Ascending aorta (tissue), 2 donors: ENCODE measurements at regions of chr3 and their contacts with region 1.

Region 1: DNA sequence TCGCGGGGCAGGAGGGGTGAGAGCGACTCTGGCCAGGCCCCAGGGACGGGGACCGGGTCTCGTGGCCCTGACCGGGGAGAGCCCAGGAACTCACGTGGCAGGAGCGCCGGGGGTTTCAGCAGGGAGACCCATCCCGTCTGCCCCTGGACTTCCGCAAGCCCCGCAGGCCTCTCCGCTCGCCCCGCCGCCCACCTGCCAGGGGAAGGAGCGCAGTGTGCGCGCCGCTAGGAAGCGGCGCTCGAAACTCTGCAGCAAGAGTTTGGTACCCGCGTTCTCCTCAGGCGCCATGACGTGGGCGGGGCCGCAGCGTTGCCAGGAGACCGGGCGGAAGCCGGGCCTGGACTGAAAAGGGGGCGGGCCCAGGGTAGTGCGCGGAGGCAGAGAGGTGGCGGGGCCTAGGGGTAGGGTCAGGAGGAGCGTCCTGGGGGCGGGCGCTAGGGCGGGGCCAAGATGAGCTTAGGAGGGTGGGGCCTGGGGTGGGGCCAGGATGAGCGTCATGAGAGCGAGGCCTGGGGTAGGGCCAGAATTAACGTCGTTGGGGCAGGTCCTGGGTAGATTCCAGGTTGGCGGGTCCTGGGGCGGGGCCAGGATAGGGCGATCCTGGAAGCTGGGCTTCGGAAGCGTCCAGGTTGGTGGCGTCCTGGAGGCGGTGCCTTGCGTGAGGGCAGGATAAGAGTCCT is 29.7 kb downstream of the ALG1L2 start:
- DNase-seq: peak; percentile 95 to 99
- H3K4me3 ChIP-seq: peak overlapping the region; percentile 82 to 87
- H3K27ac ChIP-seq: peak overlapping the region; percentile 72 to 80
- H3K4me1 ChIP-seq: peaks cover 0 to 2% of the 10 kb centered on the region in 2 donors
- H3K27me3 ChIP-seq: no peaks in the 10 kb centered on the region
- CTCF ChIP-seq: no peak

Region 2: DNA sequence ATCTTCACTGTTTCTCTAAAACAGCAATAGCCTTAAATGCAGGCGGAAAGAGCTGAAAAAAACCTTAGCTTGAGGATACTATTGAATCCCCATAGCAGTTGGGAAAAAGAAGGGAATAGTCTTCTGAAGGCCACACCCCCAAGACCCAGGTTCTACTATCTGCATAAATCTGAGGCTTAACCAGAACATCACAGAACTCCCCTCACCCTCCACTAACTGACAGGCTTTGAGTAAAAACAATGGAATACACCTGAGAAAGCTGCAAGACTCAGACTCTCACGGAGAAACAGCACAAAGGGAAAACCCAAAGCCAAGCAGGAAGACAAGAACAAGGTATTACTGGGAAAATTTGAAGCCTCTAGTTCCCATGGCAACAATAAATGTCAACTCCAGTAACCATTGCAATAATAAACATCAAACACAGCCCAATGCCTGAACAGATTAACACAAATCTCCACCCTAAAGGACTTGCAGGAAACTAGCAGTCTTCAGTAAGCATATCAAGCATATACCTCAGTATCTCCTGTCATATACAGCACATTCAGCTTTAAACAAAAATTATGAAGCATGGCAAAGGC is 274.2 kb before region 1 on chr3:
- intact Hi-C with region 1: no loop called
- DNase-seq: no peak
- H3K4me3 ChIP-seq: no peak overlapping the region
- H3K27ac ChIP-seq: no peak overlapping the region
- H3K4me1 ChIP-seq: peaks cover 0 to 2% of the 10 kb centered on the region in 2 donors
- H3K27me3 ChIP-seq: no peaks in the 10 kb centered on the region
- CTCF ChIP-seq: no peak

Region 3: DNA sequence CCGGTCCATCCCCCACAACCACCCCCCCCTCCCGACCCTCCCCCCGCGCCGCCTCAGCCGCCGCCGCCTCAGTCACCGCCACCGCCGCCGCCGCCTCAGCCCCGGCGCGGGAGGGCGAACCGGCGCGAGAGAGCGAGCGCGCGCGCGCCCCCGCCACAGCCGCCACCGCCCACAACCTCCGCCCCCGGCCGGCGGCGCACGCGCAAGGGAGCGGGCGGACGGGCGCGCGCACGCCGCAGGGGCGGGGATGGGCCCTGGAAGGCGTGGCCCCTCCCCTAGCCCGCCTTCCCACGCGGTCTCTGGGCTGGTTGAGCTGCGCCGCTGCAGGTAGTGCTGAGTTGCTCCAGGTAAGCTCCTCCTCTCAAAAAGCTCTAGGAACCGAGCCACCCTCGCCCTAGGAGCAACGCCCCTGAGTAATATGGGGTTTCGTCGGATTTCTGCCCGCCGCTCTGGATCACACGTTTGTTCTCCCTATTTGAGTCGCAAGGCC is 217.7 kb before region 1 on chr3 and contains the start of gene TMCC1:
- intact Hi-C with region 1: loop called (anchors 2 kb)
- DNase-seq: peak; percentile 22 to 87
- H3K4me3 ChIP-seq: peak within 1 kb of the TSS; percentile 66 to 94
- H3K27ac ChIP-seq: peak within 1 kb of the TSS; percentile 83 to 94
- H3K4me1 ChIP-seq: peaks cover 4 to 7% of the 10 kb centered on the region in 2 donors
- H3K27me3 ChIP-seq: no peaks in the 10 kb centered on the region
- CTCF ChIP-seq: no peak
- total RNA-seq, gene TMCC1: 11.5 TPM

Region 4: GRCh38 chr3:130014526-130014925 is 96.8 kb before region 1 on chr3:
- intact Hi-C with region 1: no loop called
- DNase-seq: no peak
- H3K4me3 ChIP-seq: no peak overlapping the region
- H3K27ac ChIP-seq: no peak overlapping the region
- H3K4me1 ChIP-seq: no peaks in the 10 kb centered on the region
- H3K27me3 ChIP-seq: no peaks in the 10 kb centered on the region
- CTCF ChIP-seq: no peak